ENCODE measurements at regions of chr14 and their contacts with region 1.

Region 1: GRCh38 chr14:64636208-64636979 is 67.8 kb upstream of the PLEKHG3 start:
- DNase-seq: peak; percentile 79
- ATAC-seq: peak; percentile 93
- H3K4me3 Mint-ChIP-seq: no peak overlapping the region
- H3K27ac Mint-ChIP-seq: no peak overlapping the region
- H3K4me1 Mint-ChIP-seq: peaks cover 10% of the 10 kb centered on the region
- H3K27me3 Mint-ChIP-seq: peaks cover 16% of the 10 kb centered on the region

Region 2: DNA sequence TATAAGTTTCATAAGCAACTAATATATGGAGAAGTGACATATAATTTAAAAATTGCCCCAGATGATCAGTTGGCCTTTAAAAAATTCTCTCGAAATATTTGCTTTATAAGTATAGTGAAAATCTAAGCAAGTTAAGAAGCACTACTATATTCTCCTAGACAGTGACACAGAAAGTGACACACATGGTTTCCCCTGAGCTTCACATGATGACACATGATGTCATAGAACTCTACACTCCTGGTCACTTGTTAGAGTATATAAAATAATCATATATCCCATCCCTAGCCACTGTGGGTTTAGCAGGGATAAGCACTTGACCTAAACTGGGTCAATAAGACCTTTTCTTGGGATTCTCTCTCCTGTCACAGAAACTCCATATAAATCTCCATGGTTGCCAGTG is 290.9 kb before region 1 on chr14:
- CTCF ChIA-PET with region 1: interaction called, 48 read pairs
- POLR2A ChIA-PET with region 1: interaction called, 5 read pairs
- DNase-seq: no peak
- ATAC-seq: no peak
- H3K4me3 Mint-ChIP-seq: no peak overlapping the region
- H3K27ac Mint-ChIP-seq: no peak overlapping the region
- H3K4me1 Mint-ChIP-seq: peaks cover 7% of the 10 kb centered on the region
- H3K27me3 Mint-ChIP-seq: no peaks in the 10 kb centered on the region

Region 3: GRCh38 chr14:64463195-64463594 is 173.2 kb before region 1 on chr14:
- CTCF ChIA-PET with region 1: no interaction called
- POLR2A ChIA-PET with region 1: no interaction called
- DNase-seq: no peak
- ATAC-seq: no peak
- H3K4me3 Mint-ChIP-seq: no peak overlapping the region
- H3K27ac Mint-ChIP-seq: no peak overlapping the region
- H3K4me1 Mint-ChIP-seq: peaks cover 46% of the 10 kb centered on the region
- H3K27me3 Mint-ChIP-seq: peaks cover 4% of the 10 kb centered on the region

Region 4: GRCh38 chr14:64540208-64541157 is 95.9 kb before region 1 on chr14 and contains the start of gene HSPA2:
- CTCF ChIA-PET with region 1: interaction called, 21 read pairs
- POLR2A ChIA-PET with region 1: no interaction called
- DNase-seq: peak; percentile 96
- ATAC-seq: peak; percentile 93
- H3K4me3 Mint-ChIP-seq: peak within 1 kb of the TSS; percentile 89
- H3K27ac Mint-ChIP-seq: peak within 1 kb of the TSS; percentile 92
- H3K4me1 Mint-ChIP-seq: peaks cover 33% of the 10 kb centered on the region
- H3K27me3 Mint-ChIP-seq: peaks cover 41% of the 10 kb centered on the region
- total RNA-seq, gene HSPA2: 1.7 to 2.2 TPM

Region 5: GRCh38 chr14:64612021-64612380 is 24.4 kb before region 1 on chr14:
- CTCF ChIA-PET with region 1: interaction called, 34 read pairs
- POLR2A ChIA-PET with region 1: no interaction called
- DNase-seq: no peak
- ATAC-seq: no peak
- H3K4me3 Mint-ChIP-seq: no peak overlapping the region
- H3K27ac Mint-ChIP-seq: no peak overlapping the region
- H3K4me1 Mint-ChIP-seq: no peaks in the 10 kb centered on the region
- H3K27me3 Mint-ChIP-seq: peaks cover 11% of the 10 kb centered on the region

Region 6: DNA sequence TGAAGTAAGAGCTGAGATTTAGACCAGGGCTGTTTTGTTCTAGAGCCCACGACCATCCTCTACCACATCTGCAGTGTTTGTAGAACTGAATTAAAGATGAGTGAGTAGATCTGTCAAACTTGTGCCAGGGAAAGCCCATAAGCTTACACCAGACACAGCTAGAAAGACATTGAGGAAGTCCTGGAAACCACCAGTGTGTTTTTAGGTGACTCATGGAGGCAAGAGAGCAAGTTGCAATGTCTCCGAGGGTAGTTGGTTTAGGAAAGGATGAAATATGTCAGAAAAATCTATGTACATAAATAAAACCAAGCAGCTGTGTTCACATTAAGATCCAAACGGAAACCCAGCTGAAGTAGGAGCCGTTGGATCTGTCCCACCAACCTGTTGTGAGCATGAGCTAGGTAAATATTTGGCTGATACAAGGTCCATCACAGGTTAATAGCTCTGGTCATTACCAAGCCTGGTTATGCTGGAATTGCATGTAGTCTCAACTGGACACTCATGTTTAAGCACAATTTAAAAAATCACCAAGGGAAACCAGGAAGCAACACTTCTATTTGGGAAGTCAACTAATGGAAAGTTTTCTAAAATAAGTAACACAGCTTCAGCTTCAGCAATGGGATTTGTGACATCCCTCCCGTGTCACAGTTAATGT is 18.0 kb after region 1 on chr14:
- CTCF ChIA-PET with region 1: interaction called, 14 read pairs
- POLR2A ChIA-PET with region 1: no interaction called
- DNase-seq: peak; percentile 22
- ATAC-seq: peak; percentile 44
- H3K4me3 Mint-ChIP-seq: no peak overlapping the region
- H3K27ac Mint-ChIP-seq: no peak overlapping the region
- H3K4me1 Mint-ChIP-seq: peaks cover 19% of the 10 kb centered on the region
- H3K27me3 Mint-ChIP-seq: peaks cover 27% of the 10 kb centered on the region

Region 7: GRCh38 chr14:64835431-64835830 is 199.0 kb after region 1 on chr14:
- CTCF ChIA-PET with region 1: no interaction called
- POLR2A ChIA-PET with region 1: no interaction called
- DNase-seq: no peak
- ATAC-seq: no peak
- H3K4me3 Mint-ChIP-seq: no peak overlapping the region
- H3K27ac Mint-ChIP-seq: no peak overlapping the region
- H3K4me1 Mint-ChIP-seq: no peaks in the 10 kb centered on the region
- H3K27me3 Mint-ChIP-seq: peaks cover 22% of the 10 kb centered on the region

Measured in activated CD8-positive, alpha-beta T cell treated with anti-CD3 and anti-CD28 coated beads, Interleukin-2, amount 10 ng/mL, durations not matched to agents 7 days and 5 days (primary cell).